Activated T-helper 1 cell treated with anti-CD3 and anti-CD28 coated beads, Interleukin-12 subunit alpha, Interleukin-12 subunit beta, Interleukin-2, Interleukin-4 antibody, amounts not matched to agents 30 ng/mL and 10 ng/mL and 1 ng/mL, durations not matched to agents 14 hours and 24 hours and 36 hours (primary cell): ENCODE measurements at regions of chr2 and their contacts with region 1.

Region 1: DNA sequence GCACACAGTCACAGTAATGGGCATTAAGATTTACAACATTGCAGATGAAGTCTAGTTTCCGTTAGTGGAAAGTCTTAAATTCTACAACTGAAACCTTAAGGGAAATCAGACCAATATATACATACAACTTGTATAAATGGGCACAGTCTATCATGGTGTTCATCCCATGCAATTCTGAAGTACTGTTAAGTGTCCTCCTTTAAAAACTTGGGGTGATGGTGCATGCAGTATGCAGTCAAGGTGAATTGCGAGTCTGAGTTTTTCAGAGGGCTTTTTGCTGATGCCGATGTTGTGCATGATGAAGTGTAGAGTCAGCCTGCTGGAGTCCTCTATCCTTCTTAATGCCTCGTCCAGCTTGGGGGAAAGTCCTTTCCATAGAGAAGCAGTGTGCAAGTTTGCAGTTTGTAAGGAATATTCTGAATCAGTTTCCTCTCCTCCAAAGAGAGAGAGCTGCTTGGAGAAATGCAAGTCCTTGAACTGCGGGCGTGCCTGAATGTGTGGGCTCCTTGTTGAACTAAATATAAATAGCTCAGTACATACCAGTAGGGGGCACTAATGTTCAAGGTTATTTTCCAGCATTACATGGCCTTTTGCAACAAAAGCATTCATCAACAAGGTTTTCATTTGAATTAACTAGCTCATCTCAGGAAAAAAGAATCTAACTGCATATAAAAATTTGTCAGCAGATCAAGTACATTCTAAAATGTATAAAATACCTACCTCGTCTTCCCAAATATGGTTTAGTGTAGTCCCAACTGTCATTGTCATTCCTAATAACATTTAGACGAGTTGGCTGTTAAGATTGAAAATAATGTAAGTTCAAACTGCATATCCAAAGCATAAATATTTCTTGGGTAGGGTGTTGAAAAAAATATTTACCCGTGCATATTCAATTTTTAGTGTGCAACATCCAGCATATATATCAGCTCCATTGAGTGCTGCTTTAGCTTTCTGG is 21.3 kb downstream of the HNRNPLL start:
- DNase-seq: peak; percentile 9
- H3K4me3 Mint-ChIP-seq: no peak overlapping the region
- H3K27ac Mint-ChIP-seq: peak overlapping the region; percentile 75
- H3K4me1 Mint-ChIP-seq: peaks cover 28% of the 10 kb centered on the region
- H3K27me3 Mint-ChIP-seq: no peaks in the 10 kb centered on the region

Region 2: DNA sequence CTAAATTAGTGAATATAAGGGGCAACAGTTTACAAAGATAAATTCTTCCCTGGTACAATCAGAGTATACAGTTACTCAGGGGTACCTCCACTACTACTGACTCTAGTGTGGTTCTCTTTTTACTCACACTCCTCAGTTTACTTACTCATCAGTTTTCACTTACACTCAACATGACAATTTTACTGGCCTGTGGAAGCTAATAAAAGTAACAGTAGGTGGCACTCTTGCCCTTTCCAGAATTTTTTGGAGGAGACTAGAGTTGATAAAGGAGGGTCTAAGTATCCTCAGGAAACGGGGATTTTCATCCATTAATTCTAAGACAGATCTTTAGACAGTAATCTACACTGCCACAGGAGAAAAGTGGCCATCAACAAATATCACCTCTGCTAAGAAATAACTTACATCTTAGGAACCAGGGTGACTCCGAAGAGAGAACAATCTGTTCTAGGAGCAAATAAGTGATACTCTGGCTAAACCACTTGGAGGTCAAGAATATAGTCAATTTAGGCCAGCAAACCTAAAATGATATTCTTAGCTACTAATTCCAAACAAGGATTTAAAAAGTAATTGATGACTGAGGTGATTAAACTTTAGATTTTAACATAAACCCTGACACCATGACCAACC is 265.6 kb before region 1 on chr2:
- intact Hi-C with region 1: loop called (anchors 5 kb)
- DNase-seq: peak; percentile 16
- H3K4me3 Mint-ChIP-seq: no peak overlapping the region
- H3K27ac Mint-ChIP-seq: no peak overlapping the region
- H3K4me1 Mint-ChIP-seq: peaks cover 19% of the 10 kb centered on the region
- H3K27me3 Mint-ChIP-seq: no peaks in the 10 kb centered on the region

Region 3: GRCh38 chr2:38535744-38536506 is 45.5 kb before region 1 on chr2:
- intact Hi-C with region 1: loop called (anchors 2 kb)
- DNase-seq: peak; percentile 72
- H3K4me3 Mint-ChIP-seq: peak overlapping the region; percentile 67
- H3K27ac Mint-ChIP-seq: no peak overlapping the region
- H3K4me1 Mint-ChIP-seq: no peaks in the 10 kb centered on the region
- H3K27me3 Mint-ChIP-seq: peaks cover 14% of the 10 kb centered on the region

Region 4: DNA sequence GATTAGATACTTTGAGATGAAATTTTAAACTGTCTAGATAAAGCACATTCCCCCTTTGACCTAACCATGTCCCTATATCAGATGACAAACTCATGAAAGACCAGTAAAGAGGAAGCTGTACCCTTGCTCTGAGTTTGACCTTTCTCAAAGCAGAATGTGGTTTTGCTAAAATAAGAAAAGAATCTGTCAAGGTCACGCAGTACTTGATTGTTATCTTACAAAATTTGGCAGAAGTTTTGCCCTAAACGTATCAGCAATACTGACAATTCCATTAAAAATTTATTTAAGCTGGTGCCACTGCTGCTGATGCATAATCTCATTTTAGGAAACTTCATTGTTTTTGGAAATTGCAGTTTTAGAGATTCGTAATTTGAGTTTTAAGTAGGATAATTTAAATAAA is 53.2 kb after region 1 on chr2:
- intact Hi-C with region 1: no loop called
- DNase-seq: no peak
- H3K4me3 Mint-ChIP-seq: no peak overlapping the region
- H3K27ac Mint-ChIP-seq: peak overlapping the region; percentile 29
- H3K4me1 Mint-ChIP-seq: peaks cover 44% of the 10 kb centered on the region
- H3K27me3 Mint-ChIP-seq: no peaks in the 10 kb centered on the region

Region 5: DNA sequence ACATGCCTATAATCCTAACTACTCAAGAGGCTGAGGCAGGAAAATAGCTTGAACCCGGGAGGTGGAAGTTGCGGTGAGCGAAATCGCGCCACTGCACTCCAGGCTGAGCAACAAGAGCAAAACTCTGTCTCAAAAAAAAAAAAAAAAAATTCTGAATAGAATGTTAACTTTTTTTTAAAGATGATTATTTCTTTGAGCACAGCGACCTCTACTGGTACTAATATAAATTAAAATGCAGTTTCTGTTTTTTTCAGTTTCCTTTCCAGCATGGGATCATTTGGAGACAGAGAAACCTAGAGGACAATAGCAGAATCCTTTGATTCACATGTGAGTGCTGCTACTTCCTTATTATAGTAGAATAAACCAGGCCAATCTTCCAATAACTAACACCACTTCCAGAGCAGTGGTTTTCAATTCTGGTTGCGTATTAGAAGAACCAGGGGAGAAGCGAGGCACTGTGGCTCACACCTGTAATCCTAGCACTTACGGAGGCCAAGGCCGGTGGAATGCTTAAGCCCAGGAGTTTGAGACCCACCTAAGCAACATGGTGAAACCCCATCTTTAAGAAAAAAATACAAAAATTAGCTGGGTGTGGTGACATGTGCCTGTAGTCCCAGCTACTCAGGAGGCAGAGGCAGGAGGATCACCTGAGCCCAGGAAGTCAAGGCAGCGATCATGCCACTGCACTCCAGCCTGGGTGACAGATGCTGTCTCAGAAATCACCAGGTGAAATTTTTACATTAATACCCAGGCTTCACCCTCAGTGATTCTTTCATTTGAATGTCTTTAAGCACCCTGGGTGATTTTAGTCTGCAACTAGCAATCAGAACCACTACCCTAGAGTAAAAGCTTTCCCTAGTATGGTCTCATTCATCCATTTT is 159.6 kb after region 1 on chr2:
- intact Hi-C with region 1: loop called (anchors 1 kb)
- DNase-seq: no peak
- H3K4me3 Mint-ChIP-seq: no peak overlapping the region
- H3K27ac Mint-ChIP-seq: no peak overlapping the region
- H3K4me1 Mint-ChIP-seq: peaks cover 34% of the 10 kb centered on the region
- H3K27me3 Mint-ChIP-seq: no peaks in the 10 kb centered on the region